ENCODE measurements at regions of chr3 and their contacts with region 1.

Region 1: GRCh38 chr3:126056681-126057546 is 27.0 kb downstream of the SLC41A3 start:
- DNase-seq: peak; percentile 17
- H3K4me3 ChIP-seq: no peak overlapping the region
- H3K27ac ChIP-seq: peak overlapping the region; percentile 57
- H3K4me1 ChIP-seq: peaks cover 32% of the 10 kb centered on the region
- H3K27me3 ChIP-seq: no peaks in the 10 kb centered on the region
- CTCF ChIP-seq: no peak

Region 2: DNA sequence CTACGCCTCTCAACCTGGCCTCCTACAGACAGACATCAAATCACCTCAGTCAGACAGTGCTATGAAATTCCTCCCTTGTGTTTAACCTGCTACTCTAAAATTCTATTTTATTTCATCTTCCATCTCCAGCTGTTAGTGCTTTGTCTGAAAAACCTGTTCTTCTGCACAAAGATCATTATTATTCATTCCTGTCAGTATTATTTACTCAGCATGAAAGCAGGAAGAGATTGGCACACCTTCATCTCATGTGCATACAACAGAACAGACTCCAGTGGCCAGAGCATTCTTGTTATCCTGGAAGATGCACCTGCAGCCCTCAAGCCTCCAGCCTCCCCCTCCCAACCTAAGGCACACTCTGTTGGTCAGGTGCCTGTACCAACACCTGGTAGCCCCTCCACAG is 89.8 kb before region 1 on chr3:
- CTCF ChIA-PET with region 1: no interaction called
- dilution Hi-C with region 1: no loop called
- in situ Hi-C with region 1: no loop called
- intact Hi-C with region 1: no loop called
- DNase-seq: no peak
- H3K4me3 ChIP-seq: no peak overlapping the region
- H3K27ac ChIP-seq: no peak overlapping the region
- H3K4me1 ChIP-seq: peaks cover 2% of the 10 kb centered on the region
- H3K27me3 ChIP-seq: peaks cover 4% of the 10 kb centered on the region
- CTCF ChIP-seq: no peak

Region 3: DNA sequence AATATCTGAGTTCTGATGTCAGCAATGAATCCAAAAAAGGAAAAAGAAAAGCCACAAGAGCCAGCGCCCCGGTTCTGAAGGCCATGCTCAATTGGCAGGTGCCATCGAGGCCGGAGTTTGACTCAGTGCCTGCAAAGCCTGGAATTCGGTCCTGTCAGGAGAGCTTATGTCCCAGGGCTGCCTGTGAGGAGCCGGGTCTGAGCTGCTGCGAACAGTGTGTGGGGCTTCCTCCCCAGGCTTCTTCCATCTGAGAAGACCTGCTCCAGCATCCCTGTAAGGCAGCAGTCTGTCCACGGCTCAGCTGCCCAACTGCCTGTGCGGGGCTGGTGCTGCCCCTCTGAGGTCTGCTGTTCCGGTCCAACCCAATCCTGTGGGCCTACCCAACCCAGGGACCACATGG is 41.8 kb before region 1 on chr3:
- CTCF ChIA-PET with region 1: no interaction called
- dilution Hi-C with region 1: loop called (anchors 5 kb)
- in situ Hi-C with region 1: no loop called
- intact Hi-C with region 1: no loop called
- DNase-seq: no peak
- H3K4me3 ChIP-seq: no peak overlapping the region
- H3K27ac ChIP-seq: no peak overlapping the region
- H3K4me1 ChIP-seq: peaks cover 14% of the 10 kb centered on the region
- H3K27me3 ChIP-seq: no peaks in the 10 kb centered on the region
- CTCF ChIP-seq: no peak

Region 4: GRCh38 chr3:126100634-126101301 is 43.9 kb after region 1 on chr3:
- CTCF ChIA-PET with region 1: no interaction called
- dilution Hi-C with region 1: loop called (anchors 5 kb)
- in situ Hi-C with region 1: no loop called
- intact Hi-C with region 1: no loop called
- DNase-seq: peak; percentile 33
- H3K4me3 ChIP-seq: no peak overlapping the region
- H3K27ac ChIP-seq: no peak overlapping the region
- H3K4me1 ChIP-seq: no peaks in the 10 kb centered on the region
- H3K27me3 ChIP-seq: no peaks in the 10 kb centered on the region
- CTCF ChIP-seq: no peak

Region 5: DNA sequence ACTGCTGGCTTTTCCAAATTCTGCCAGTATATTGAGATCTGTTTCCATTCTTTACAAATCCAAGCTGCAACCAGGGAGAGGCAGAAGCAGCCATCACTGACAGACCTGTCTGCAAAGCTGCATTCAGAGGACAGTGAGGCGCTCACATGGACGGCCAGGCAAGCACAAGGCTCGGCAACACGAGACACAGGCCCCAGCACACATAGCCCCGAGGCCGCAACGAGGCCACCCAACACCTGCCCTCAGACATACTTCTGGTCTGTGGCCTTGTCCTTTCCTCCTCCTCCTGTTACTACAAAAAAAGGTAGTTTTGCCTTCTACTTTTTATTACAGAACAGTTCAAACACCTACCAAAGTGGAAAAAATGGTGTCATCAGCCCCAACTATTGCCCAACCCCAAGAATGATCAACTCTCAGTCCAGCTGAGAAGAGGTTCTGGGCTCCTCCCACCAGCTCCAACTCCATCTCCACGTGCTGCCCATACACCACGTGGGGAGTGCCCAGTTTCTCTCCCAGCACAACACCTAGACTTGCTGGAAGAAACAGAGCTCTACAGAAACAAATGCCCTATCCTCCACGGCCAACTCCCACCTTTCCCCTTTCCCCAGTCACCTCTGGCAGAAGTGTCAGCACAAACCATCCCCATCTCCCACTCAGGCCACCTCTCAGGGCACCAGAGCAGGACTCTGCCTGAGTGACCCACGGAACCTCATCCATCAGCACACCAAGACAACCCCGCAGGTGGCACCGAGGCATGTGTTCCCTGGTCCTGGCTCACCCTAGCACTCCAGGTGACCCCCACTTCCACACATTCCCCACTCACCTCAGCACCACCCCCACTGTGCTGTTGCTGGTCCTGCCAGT is 411.3 kb after region 1 on chr3:
- CTCF ChIA-PET with region 1: no interaction called
- dilution Hi-C with region 1: no loop called
- in situ Hi-C with region 1: no loop called
- intact Hi-C with region 1: no loop called
- DNase-seq: no peak
- H3K4me3 ChIP-seq: no peak overlapping the region
- H3K27ac ChIP-seq: no peak overlapping the region
- H3K4me1 ChIP-seq: peaks cover 18% of the 10 kb centered on the region
- H3K27me3 ChIP-seq: no peaks in the 10 kb centered on the region
- CTCF ChIP-seq: no peak

Measured in mammary epithelial cell (primary cell).